Posterior cingulate gyrus (tissue), 11 donors: ENCODE measurements at regions of chr12 and their contacts with region 1.

Region 1: DNA sequence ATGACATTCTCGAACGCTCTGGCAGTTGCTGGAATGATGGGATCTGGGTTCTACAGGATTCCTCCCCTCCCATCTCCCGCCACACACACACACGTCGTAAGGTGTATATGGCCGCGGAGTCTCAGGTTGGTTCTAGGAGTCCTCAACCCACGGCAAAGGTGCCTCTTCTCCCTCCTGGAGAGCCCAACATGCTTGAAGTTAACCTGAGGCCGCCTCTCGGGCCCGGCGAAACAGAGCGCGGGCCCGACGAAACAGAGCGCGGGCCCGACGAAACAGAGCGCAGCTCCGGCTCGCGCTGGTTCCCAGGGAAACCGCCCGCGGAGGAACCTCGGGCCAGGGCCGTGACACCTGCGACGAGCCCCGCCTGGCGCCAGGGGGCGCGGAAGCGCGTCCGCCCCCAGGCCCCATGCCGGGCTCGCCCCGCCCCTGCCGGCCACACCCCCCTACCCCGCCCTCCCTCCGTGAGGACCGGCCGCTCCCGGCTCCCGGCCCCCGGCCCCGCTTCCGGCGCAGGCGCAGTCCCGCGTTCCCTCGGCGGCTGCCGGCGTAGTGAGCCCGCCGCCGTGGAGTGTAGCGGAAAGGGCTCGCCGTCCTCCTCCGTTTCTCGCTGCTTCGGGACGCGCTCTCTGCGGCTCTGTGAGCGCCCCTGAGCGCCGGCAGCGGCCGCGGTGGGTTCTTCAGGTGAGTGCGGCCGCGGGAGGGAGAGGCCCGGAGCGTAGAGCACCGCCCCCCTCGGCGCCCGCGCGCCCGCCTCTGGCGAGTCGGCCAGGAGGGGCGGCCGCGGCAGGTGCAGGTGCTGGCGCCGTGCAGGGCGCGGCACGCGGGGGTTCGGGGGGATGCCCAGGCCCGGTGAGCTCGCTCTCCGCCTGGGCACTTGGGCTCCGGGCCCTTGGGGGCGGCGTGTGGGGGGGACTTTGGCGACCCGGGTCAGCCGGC is at the start of gene RAB3IP:
- DNase-seq: peak; percentile 78 to 98 (median 84)

Region 2: GRCh38 chr12:69130064-69130463 is 608.6 kb before region 1 on chr12:
- intact Hi-C with region 1: no loop called
- DNase-seq: no peak

Region 3: GRCh38 chr12:69585189-69586062 is 153.2 kb before region 1 on chr12 and contains the start of gene CCT2:
- intact Hi-C with region 1: loop called (anchors 1 kb)
- DNase-seq: peak; percentile 94 to 100 (median 98)

Region 4: GRCh38 chr12:69837191-69837590 is 98.6 kb after region 1 on chr12:
- intact Hi-C with region 1: loop called (anchors 10 kb)
- DNase-seq: peak in 1 of 10 donors; percentile 20

Region 5: DNA sequence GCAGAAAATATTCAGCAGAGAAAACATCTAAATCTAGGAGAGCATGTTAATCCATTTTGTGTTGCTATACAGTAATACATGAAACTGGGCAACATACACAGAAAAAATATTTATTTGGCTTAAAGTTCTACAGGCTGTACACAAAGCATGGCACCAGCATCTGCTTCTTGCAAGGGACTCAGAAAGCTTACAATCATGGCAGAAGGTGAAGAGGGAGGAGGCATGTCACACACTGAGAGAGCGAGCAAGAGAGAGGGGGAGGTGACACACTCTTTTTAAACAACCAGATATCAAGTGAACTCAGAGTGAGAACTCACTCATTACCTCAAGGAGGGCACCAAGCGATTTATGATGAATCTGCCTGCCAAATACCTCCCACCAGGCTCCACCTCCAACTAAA is 410.4 kb after region 1 on chr12:
- intact Hi-C with region 1: no loop called
- DNase-seq: no peak

Region 6: GRCh38 chr12:70436836-70437235 is 698.2 kb after region 1 on chr12:
- intact Hi-C with region 1: no loop called
- DNase-seq: no peak